ENCODE measurements at regions of chr15 and their contacts with region 1.

Region 1: DNA sequence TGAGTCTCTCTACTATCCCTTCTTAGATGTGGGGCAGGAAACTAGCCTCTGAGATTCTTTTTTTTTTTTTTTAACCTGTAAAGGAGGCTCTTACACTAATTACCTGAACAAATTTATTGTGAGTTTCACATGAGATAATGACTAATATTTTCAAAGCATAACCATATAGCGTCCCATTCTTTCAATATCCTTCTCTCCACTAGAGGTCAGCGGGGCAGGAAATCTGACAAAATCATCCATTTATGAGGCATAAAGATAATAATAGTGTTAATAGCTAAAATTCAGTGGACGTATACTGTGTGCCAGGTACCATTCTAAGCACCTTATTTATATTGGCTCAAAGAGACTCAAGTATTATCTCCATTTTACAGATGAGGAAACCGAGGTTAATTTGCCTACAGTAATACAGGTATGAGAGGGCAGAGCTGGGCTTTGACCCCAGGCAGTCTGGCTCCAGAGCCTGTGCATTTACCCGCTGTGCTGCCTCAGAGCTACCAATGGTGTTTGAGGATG is 16.3 kb upstream of the SMAD6 start:
- DNase-seq: no peak
- ATAC-seq: peak; percentile 51 to 78; a peak in 4 of 6 replicates
- H3K4me3 ChIP-seq: no peak overlapping the region
- H3K27ac ChIP-seq: no peak overlapping the region
- H3K4me1 ChIP-seq: no peaks in the 10 kb centered on the region
- CTCF ChIP-seq: peak; percentile 58
- EP300 ChIP-seq: no peak
- POLR2A ChIP-seq: no peak
- RAD21 ChIP-seq: peak; percentile 44

Region 2: DNA sequence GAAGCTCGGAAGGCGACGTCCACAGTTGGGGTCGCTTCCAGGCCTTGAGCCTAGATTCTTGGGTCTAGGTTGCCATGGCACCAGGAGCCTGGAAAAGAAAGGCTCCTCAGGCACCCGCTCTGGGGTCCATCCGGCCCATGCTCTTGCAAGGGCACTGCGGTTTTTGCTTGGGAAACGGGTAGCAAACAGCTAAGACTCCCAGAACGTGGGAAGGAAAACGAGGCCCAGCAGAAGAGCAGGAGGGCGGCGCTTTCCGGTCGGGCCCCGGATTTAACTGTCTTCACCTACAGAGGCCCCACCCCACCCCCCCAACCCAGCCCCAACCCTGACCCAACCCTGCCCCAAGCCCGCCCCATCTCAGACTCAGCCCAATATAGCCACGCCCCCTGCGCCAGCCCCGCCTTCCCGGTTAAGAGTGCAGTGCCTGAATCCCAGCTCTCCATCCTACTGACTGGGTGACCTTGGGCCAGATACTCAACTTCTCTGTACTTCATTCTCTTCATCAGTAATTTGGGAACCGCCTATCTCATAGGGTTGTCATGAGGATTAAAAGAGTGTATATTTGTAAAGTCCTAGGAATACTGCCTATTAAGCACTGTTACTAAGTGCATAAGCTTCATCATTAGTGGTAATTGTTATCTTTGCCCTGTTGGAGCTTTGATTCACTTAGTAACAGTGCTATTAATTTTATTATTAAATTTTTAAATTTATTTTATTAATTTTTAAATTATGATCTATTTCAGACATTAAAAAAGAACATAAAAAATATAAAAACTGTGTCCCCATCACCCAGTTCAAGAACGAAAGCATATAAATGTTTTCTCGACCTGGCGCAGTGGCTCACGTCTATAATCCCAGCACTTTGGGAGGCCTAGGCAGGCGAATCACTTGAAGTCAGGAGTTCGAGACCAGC is 12.0 kb before region 1 on chr15:
- CTCF ChIA-PET with region 1: interaction called, 11 read pairs
- POLR2A ChIA-PET with region 1: no interaction called
- DNase-seq: peak in 1 of 2 experiments; percentile 58
- ATAC-seq: peak; percentile 44 to 84
- H3K4me3 ChIP-seq: no peak overlapping the region
- H3K27ac ChIP-seq: no peak overlapping the region
- H3K4me1 ChIP-seq: no peaks in the 10 kb centered on the region
- CTCF ChIP-seq: no peak
- EP300 ChIP-seq: no peak
- POLR2A ChIP-seq: no peak
- RAD21 ChIP-seq: no peak

Region 3: GRCh38 chr15:66707310-66708082 is 21.8 kb after region 1 on chr15:
- CTCF ChIA-PET with region 1: interaction called, 94 read pairs
- POLR2A ChIA-PET with region 1: no interaction called
- DNase-seq: peak; percentile 63 to 73
- ATAC-seq: peak; percentile 31 to 70; a peak in 4 of 6 replicates
- H3K4me3 ChIP-seq: peak overlapping the region; percentile 90; the same call in 2 of the 3 replicates
- H3K27ac ChIP-seq: peak overlapping the region; percentile 47 to 95
- H3K4me1 ChIP-seq: peaks cover 76% of the 10 kb centered on the region
- CTCF ChIP-seq: peak; percentile 41
- EP300 ChIP-seq: no peak
- POLR2A ChIP-seq: no peak
- RAD21 ChIP-seq: peak; percentile 53 to 68

Measured in A549 (cell line).